GM10248 (cell line): ENCODE measurements at regions of chr5 and their contacts with region 1.

Region 1: DNA sequence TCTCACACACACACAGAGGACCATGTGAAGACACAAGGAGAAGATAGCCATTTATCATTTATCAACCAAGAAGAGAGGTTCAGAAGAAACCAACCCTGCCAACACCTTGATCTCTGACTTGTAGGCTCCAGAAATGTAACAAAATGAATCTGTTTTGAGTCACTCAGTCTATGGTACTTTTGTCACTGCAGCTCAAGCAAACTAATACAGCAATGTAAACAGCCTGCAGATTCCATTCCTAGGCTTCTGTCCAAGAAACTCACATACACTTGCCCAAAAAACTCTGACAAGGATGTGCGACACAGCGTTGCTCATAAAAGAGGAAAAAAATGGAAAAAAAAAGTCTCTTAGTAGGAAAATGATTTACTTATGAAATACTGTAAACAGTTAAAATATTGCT is 33.4 kb downstream of the TRIM36 start:
- DNase-seq: no peak
- CTCF ChIP-seq: no peak

Region 2: DNA sequence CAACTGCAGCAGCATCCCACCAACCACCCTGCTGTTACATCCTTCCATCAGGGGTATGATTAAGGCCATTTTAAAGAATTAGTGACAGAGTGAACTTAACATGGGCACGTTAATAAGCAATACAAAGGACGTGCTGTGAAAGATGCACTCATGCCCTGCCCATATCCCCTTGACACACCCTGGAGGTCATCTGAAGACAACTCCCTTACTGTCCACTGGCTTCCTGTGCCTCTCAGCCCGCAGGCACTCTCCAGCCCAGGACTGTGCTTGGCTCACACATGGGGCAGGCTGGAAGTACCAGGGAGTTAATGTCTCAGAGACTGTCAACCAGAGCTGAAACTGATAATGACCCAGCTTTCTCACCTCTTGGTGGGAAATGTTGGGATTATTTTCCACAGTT is 48.3 kb before region 1 on chr5:
- CTCF ChIA-PET with region 1: no interaction called
- POLR2A ChIA-PET with region 1: no interaction called
- DNase-seq: no peak
- CTCF ChIP-seq: no peak

Region 3: DNA sequence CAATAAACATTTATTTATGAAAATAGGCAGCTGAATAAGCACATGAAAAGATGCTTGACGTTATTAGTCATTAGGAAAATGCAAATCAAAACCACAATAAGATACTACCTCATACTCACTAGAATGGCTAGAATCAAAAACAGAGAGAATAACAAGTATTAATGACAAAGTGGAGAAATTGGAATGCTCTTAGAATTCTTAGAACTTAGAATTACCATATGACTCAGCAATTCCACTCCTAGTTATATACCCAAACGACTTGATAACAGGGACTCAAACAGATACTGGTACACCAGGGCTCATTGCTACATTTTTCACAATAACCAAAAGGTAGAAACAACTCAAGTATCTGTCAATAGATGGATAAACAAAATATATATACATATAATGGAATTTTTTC is 48.5 kb after region 1 on chr5:
- CTCF ChIA-PET with region 1: interaction called, 3 read pairs
- POLR2A ChIA-PET with region 1: interaction called, 13 read pairs
- DNase-seq: no peak
- CTCF ChIP-seq: no peak